ENCODE measurements at regions of chr5 and their contacts with region 1.

Region 1: GRCh38 chr5:56095579-56096102 is 100.9 kb upstream of the IL6ST start:
- DNase-seq: no peak
- ATAC-seq: no peak
- H3K4me3 Mint-ChIP-seq: peak overlapping the region; percentile 36
- H3K27ac Mint-ChIP-seq: peak overlapping the region; percentile 84
- H3K4me1 Mint-ChIP-seq: peaks cover 89% of the 10 kb centered on the region
- H3K27me3 Mint-ChIP-seq: no peaks in the 10 kb centered on the region

Region 2: DNA sequence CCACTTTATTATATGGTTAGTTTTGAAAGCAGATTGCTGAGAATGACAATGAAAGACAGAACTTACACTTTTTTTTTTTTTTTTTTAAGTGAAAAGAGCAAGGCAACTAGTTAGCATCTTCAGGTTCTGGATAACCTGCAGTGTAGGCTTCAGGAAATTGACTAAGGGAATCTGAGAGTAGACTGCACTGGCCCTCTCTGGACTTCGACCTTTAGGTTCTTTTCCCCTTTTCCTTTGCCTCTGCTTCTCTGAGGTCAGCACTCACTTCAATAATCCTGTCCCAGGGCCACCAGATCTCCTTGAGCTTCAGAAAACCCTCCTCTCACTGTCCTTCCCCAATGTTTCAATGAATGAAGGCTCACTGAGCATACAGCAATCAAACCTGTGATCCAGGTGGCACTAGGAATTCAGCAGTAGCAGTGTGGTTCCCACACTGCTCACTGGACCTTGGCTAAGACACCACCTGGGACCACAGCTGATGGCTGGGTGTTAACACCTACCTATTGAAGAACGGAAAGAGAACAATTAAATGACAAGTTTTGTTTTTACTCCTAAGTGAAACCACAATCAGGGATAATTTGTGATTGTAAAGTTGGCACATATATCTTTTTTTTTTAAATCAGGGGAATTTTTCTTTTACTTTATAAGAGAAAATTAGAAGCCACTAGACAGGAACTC is 15.1 kb before region 1 on chr5:
- CTCF ChIA-PET with region 1: interaction called, 4 read pairs
- POLR2A ChIA-PET with region 1: no interaction called
- intact Hi-C with region 1: loop called in 1 of 2 experiments (anchors 1 kb)
- DNase-seq: peak; percentile 46
- ATAC-seq: peak; percentile 71
- H3K4me3 Mint-ChIP-seq: peak overlapping the region; percentile 43
- H3K27ac Mint-ChIP-seq: peak overlapping the region; percentile 92
- H3K4me1 Mint-ChIP-seq: peaks cover 54% of the 10 kb centered on the region
- H3K27me3 Mint-ChIP-seq: no peaks in the 10 kb centered on the region

Region 3: DNA sequence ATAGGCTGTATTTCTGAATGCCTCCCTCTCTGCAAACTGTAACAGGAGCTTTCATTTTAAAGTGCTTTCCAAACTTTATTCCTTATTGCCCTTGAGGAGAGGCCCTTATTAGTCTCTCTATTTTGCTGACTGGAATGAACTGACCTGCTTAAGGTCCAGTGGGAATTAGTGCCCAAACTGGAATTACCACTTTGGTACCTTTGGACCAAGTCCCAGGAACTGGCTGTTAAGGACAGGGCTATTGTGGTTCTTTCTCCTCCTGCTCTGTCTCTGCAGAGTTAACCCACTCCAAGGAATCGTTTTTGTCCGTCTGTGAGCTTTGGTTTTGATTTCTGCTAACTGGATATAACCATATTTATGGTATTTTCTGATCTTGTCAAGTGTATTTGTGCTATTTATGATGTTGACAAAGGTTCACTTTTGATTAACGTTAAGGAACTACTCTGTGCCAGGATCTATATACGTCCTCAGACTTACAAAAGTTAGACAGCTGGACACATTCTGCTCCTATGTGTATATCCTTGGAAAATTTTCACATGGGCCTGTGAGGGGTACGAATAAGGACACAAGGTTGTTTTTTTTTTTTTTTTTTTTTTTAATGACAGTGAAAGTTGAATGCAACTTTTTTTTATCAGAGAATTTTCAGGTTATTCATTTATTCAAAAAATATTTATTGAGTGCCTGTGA is 326.6 kb after region 1 on chr5:
- CTCF ChIA-PET with region 1: no interaction called
- POLR2A ChIA-PET with region 1: no interaction called
- intact Hi-C with region 1: no loop called
- DNase-seq: no peak
- ATAC-seq: no peak
- H3K4me3 Mint-ChIP-seq: no peak overlapping the region
- H3K27ac Mint-ChIP-seq: no peak overlapping the region
- H3K4me1 Mint-ChIP-seq: no peaks in the 10 kb centered on the region
- H3K27me3 Mint-ChIP-seq: no peaks in the 10 kb centered on the region

Region 4: GRCh38 chr5:56464935-56465768 is 369.5 kb after region 1 on chr5:
- CTCF ChIA-PET with region 1: no interaction called
- POLR2A ChIA-PET with region 1: no interaction called
- intact Hi-C with region 1: no loop called
- DNase-seq: no peak
- ATAC-seq: no peak
- H3K4me3 Mint-ChIP-seq: no peak overlapping the region
- H3K27ac Mint-ChIP-seq: no peak overlapping the region
- H3K4me1 Mint-ChIP-seq: no peaks in the 10 kb centered on the region
- H3K27me3 Mint-ChIP-seq: no peaks in the 10 kb centered on the region

Measured in activated CD4-positive, alpha-beta T cell treated with anti-CD3 and anti-CD28 coated beads for 36 hours (primary cell).